Activated B cell treated with CpG ODN at 0.5 μM for 24 hours (primary cell): ENCODE measurements at regions of chr20 and their contacts with region 1.

Region 1: DNA sequence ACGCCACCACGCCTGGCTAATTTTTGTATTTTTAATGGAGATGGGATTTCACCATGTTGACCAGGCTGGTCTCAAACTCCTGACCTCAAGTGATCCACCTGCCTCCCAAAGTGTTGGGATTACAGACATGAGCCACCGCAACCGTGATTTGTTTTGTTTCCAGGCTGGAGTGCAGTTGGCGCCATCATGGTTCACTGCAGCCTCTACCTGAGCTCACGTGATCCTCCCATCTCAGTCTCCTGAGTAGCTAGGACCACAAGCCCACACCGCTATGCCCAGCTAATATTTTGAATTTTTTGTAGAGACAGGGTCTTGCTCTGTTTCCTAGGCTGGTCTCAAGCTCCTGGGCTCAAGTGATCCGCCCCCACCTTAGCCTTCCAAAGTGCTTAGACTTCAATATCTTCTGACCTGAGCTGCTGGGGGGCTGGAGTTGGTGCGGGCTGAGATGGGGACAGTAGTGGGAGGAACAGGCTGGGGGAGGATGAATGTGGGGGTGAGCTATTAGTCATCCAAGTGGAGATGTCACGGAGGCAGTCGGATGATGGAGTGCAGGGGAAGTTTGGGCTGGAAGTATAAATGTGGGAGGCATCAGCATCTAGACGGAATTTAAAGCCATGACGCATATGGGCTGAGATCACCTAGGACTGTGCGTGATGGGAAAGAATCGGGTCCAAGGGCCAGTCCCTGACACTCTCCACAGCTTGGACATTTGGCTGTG is 23.1 kb upstream of the ZMYND8 start:
- DNase-seq: no peak
- ATAC-seq: no peak
- H3K4me3 Mint-ChIP-seq: no peak overlapping the region
- H3K27ac Mint-ChIP-seq: no peak overlapping the region
- H3K4me1 Mint-ChIP-seq: peaks cover 13% of the 10 kb centered on the region
- H3K27me3 Mint-ChIP-seq: no peaks in the 10 kb centered on the region
- CTCF ChIP-seq: no peak

Region 2: DNA sequence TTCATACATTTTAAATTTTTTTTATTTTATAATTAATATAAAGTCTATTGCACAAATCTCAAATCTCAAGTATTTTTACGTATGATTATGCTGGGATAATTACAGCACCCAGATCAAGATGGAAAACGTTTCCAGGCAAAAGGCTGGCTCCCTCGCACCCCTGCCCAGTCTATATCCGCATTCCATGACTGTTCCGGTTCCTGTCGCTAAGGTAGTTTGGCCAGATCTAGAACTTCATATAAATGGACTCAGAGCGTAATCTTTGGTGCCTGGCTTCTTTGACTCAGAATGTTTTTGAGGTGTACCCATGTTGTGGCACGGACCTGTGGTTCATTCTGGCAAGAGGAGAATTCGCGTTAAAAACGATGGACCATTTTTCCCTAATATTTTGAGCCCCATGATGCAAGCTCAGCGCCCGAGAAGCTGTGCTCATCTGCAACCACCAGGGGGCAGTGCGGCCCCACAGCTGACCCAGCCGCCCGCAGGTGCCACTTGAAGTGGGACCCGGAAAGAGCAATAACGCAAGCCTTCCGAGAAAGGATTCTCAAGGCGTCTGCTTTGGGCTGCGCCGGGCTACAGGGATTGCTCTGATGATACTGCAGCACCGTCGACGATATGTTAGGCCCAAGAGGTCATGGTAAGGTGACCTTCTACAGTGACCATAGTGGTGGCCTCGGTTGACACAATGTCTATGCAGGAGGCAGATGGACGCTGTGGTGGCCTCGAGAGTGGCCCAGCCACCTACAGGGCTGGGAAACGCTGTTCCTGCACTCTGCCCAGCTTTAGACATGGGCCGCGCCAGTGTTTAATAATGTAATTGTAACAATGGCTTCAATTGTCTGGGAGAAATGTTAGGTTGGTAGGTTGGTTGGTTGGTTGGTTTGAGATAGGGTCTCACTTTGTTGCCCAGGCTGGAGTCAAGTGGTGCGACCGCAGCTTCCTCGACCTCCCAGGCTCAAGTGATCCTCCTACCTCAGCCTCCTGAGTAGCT is 183.2 kb before region 1 on chr20:
- CTCF ChIA-PET with region 1: interaction called, 62 read pairs
- POLR2A ChIA-PET with region 1: no interaction called
- intact Hi-C with region 1: loop called (anchors 1 kb)
- DNase-seq: peak; percentile 74
- ATAC-seq: peak; percentile 95
- H3K4me3 Mint-ChIP-seq: no peak overlapping the region
- H3K27ac Mint-ChIP-seq: no peak overlapping the region
- H3K4me1 Mint-ChIP-seq: peaks cover 7% of the 10 kb centered on the region
- H3K27me3 Mint-ChIP-seq: peaks cover 3% of the 10 kb centered on the region
- CTCF ChIP-seq: peak; percentile 95

Region 3: GRCh38 chr20:47258745-47259695 is 120.6 kb before region 1 on chr20:
- CTCF ChIA-PET with region 1: interaction called, 21 read pairs
- POLR2A ChIA-PET with region 1: interaction called, 4 read pairs
- intact Hi-C with region 1: no loop called
- DNase-seq: peak; percentile 29
- ATAC-seq: peak; percentile 38
- H3K4me3 Mint-ChIP-seq: peak overlapping the region; percentile 56
- H3K27ac Mint-ChIP-seq: peak overlapping the region; percentile 90
- H3K4me1 Mint-ChIP-seq: peaks cover 68% of the 10 kb centered on the region
- H3K27me3 Mint-ChIP-seq: no peaks in the 10 kb centered on the region
- CTCF ChIP-seq: no peak

Region 4: DNA sequence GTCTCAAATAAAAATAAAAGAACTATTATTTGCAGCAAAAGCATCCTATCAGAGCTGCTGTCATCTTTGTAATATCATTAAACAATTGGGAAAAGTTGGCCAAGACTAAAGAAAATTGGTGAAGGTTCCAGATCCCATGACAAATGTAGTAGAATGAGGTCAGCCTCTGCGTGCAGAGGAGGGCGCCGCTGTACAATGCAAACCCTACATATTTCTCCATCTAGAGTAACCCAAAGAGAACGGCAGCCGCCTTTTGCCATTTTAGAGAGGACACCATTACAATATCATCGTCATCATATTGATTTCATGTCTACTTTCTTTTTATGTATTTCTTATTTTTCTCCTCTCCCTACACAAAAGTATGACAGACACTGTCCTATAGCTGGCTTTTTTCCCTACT is 82.6 kb before region 1 on chr20:
- CTCF ChIA-PET with region 1: interaction called, 27 read pairs
- POLR2A ChIA-PET with region 1: no interaction called
- intact Hi-C with region 1: loop called (anchors 1 kb)
- DNase-seq: no peak
- ATAC-seq: no peak
- H3K4me3 Mint-ChIP-seq: no peak overlapping the region
- H3K27ac Mint-ChIP-seq: no peak overlapping the region
- H3K4me1 Mint-ChIP-seq: no peaks in the 10 kb centered on the region
- H3K27me3 Mint-ChIP-seq: no peaks in the 10 kb centered on the region
- CTCF ChIP-seq: no peak

Region 5: DNA sequence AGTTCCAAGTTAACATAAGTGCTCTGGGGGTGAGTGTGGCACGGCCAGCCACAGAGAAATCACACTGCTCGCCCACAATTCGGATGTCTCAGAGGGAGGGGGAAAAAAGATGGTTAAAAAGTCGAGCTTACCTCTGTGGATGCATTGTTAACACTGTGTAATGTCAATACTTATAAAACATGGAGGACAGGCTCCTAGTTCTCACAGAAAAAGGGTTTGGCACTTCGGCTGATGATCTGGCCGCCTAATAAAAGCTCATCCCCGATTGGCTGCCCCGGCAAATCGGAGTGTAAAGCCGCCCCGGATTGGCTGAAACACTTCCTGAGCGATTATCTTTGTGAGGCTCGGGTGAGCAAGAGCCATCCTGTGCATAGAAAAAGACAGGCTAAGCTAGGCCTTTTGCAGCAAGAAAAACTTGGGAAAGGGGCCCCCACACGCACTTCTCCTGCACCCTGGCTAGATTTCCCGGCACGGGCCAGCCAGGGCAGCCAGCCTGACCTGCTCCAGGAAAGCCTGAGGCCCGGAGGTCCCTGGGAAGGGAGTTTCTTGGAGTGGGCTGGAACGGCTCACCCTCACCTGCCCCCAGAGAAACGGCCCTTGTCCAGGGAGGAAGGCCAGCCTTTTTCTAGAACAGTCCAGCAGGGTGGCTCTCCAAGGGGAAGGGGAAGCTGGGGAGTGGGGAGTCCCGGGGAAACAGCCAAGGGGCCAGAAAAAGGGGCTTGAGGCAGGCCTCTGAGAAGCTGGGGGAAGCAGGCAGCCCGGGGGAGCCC is 22.9 kb before region 1 on chr20 and contains the start of gene ZMYND8:
- CTCF ChIA-PET with region 1: interaction called, 84 read pairs
- POLR2A ChIA-PET with region 1: interaction called, 23 read pairs
- intact Hi-C with region 1: loop called (anchors 2 kb)
- DNase-seq: peak; percentile 96
- ATAC-seq: peak; percentile 81
- H3K4me3 Mint-ChIP-seq: no peak within 1 kb of the TSS
- H3K27ac Mint-ChIP-seq: no peak within 1 kb of the TSS
- H3K4me1 Mint-ChIP-seq: peaks cover 55% of the 10 kb centered on the region
- H3K27me3 Mint-ChIP-seq: no peaks in the 10 kb centered on the region
- CTCF ChIP-seq: no peak
- total RNA-seq, gene ZMYND8: 42.6 and 44.7 TPM in 2 replicates

Region 6: GRCh38 chr20:47487175-47487917 is 107.8 kb after region 1 on chr20:
- CTCF ChIA-PET with region 1: interaction called, 14 read pairs
- POLR2A ChIA-PET with region 1: interaction called, 4 read pairs
- intact Hi-C with region 1: no loop called
- DNase-seq: peak; percentile 42
- ATAC-seq: peak; percentile 77
- H3K4me3 Mint-ChIP-seq: peak overlapping the region; percentile 72
- H3K27ac Mint-ChIP-seq: peak overlapping the region; percentile 97
- H3K4me1 Mint-ChIP-seq: peaks cover 79% of the 10 kb centered on the region
- H3K27me3 Mint-ChIP-seq: no peaks in the 10 kb centered on the region
- CTCF ChIP-seq: no peak